ENCODE measurements at regions of chr4 and their contacts with region 1.

Region 1: GRCh38 chr4:109157696-109158095 is 144.8 kb downstream of the COL25A1 start:
- DNase-seq: no peak
- H3K4me3 ChIP-seq: no peak overlapping the region
- H3K27ac ChIP-seq: no peak overlapping the region
- H3K4me1 ChIP-seq: no peaks in the 10 kb centered on the region
- H3K27me3 ChIP-seq: no peaks in the 10 kb centered on the region
- CTCF ChIP-seq: no peak
- EP300 ChIP-seq: no peak
- POLR2A ChIP-seq: no peak

Region 2: GRCh38 chr4:109177096-109177810 is 19.6 kb after region 1 on chr4:
- intact Hi-C with region 1: loop called in 1 of 4 experiments (anchors 2 kb)
- DNase-seq: no peak
- H3K4me3 ChIP-seq: no peak overlapping the region
- H3K27ac ChIP-seq: no peak overlapping the region
- H3K4me1 ChIP-seq: no peaks in the 10 kb centered on the region
- H3K27me3 ChIP-seq: no peaks in the 10 kb centered on the region
- CTCF ChIP-seq: no peak
- EP300 ChIP-seq: no peak
- POLR2A ChIP-seq: no peak

Measured in ovary (tissue), 10 donors.